ENCODE measurements at regions of chr11 and their contacts with region 1.

Region 1: DNA sequence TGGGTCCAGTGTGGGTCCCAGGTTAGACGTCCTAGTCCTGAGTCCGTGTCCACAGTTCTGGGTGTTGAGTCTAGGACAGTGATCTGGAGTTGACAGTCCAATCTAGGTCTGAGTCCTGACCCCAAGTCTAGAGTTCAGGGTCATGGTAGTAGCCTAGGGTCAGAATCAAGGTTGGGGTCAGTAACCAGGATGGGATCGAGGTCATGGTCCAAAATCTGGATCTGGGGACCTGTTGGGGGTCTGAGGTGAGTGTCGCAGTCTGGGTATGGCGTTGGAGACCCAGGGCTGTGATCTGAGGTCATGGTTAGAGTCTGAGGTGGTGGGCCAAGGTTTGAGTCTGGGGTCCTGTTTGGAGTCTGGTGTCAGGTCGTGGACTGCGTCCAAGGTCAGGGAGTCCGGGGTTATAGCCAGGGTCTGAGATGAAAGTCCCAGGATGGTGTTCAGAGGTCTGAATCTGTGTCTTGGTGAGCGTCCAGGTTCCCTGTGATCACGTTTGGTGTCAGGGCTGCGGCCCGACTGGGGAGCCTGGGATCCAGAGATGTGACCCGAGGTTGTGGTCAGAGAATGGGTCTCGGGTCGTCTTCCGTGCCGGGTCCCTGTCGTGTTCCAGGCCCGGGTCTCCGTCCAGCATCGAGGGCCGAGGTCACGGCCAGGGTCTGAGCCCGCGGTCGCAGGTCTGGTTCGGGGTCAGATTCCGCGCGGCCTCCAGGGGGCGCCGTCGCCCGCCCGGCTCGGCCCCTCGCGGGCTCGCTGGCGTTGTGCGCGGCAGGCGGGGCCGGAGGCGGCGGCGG is 445 bp upstream of the GRK2 start:
- DNase-seq: peak; percentile 61 to 85 (median 77)
- H3K4me3 ChIP-seq: peak overlapping the region in 1 of 2 donors; percentile 23
- H3K4me3 Mint-ChIP-seq: peak overlapping the region; percentile 77 to 86 (median 80)
- H3K27ac ChIP-seq: peak overlapping the region; percentile 63
- H3K27ac Mint-ChIP-seq: peak overlapping the region; percentile 79 to 94 (median 87)
- H3K4me1 ChIP-seq: peaks cover 61% of the 10 kb centered on the region
- H3K4me1 Mint-ChIP-seq: peaks cover 34 to 82% (median 50%) of the 10 kb centered on the region in 4 donors
- H3K27me3 ChIP-seq: no peaks in the 10 kb centered on the region
- H3K27me3 Mint-ChIP-seq: peaks cover 0 to 5% of the 10 kb centered on the region in 2 donors

Region 2: GRCh38 chr11:67213178-67213621 is 52.6 kb before region 1 on chr11:
- CTCF ChIA-PET with region 1: no interaction called
- POLR2A ChIA-PET with region 1: no interaction called
- intact Hi-C with region 1: no loop called
- DNase-seq: no peak
- H3K4me3 ChIP-seq: no peak overlapping the region
- H3K4me3 Mint-ChIP-seq: no peak overlapping the region
- H3K27ac ChIP-seq: no peak overlapping the region
- H3K27ac Mint-ChIP-seq: no peak overlapping the region
- H3K4me1 ChIP-seq: no peaks in the 10 kb centered on the region
- H3K4me1 Mint-ChIP-seq: peaks cover 0 to 6% (median 1%) of the 10 kb centered on the region in 4 donors
- H3K27me3 ChIP-seq: no peaks in the 10 kb centered on the region
- H3K27me3 Mint-ChIP-seq: no peaks in the 10 kb centered on the region

Region 3: DNA sequence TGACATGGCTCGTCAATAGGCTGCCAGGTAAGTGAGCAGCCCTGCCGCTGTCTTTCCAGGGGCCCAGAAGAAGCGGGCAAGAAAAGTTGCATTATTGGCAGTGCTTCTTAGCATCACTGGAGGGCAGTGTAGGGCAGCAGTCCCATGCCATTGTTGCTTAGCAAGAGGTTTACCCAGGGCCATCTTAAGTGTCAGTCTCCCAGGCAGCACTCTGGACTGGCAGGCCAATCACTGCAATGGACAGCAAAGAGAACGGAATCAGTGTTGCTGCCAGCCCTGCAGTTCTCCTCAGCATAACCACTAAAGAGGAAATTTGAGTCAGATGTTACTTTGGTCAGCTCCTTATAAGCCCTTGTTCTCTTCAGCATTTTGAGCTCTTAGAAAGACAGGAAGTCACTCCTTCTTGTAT is 13.0 kb before region 1 on chr11:
- CTCF ChIA-PET with region 1: interaction called, 24 read pairs
- POLR2A ChIA-PET with region 1: interaction called, 5 read pairs
- intact Hi-C with region 1: no loop called
- DNase-seq: peak; percentile 26 to 46 (median 40)
- H3K4me3 ChIP-seq: no peak overlapping the region
- H3K4me3 Mint-ChIP-seq: peak overlapping the region in 3 of 8 donors; percentile 6 to 59 (median 39)
- H3K27ac ChIP-seq: no peak overlapping the region
- H3K27ac Mint-ChIP-seq: peak overlapping the region in 6 of 7 donors; percentile 7 to 78 (median 32)
- H3K4me1 ChIP-seq: peaks cover 15% of the 10 kb centered on the region
- H3K4me1 Mint-ChIP-seq: peaks cover 10 to 52% (median 32%) of the 10 kb centered on the region in 4 donors
- H3K27me3 ChIP-seq: no peaks in the 10 kb centered on the region
- H3K27me3 Mint-ChIP-seq: no peaks in the 10 kb centered on the region

Region 4: GRCh38 chr11:67288452-67289225 is 22.8 kb after region 1 on chr11:
- CTCF ChIA-PET with region 1: interaction called, 22 read pairs
- POLR2A ChIA-PET with region 1: interaction called, 1,163 read pairs
- intact Hi-C with region 1: loop called (anchors 1 kb)
- DNase-seq: peak; percentile 89 to 94 (median 91)
- H3K4me3 ChIP-seq: peak overlapping the region; percentile 58 to 62
- H3K4me3 Mint-ChIP-seq: peak overlapping the region; percentile 79 to 90 (median 86)
- H3K27ac ChIP-seq: peak overlapping the region; percentile 88
- H3K27ac Mint-ChIP-seq: peak overlapping the region; percentile 95 to 100 (median 98)
- H3K4me1 ChIP-seq: peaks cover 77% of the 10 kb centered on the region
- H3K4me1 Mint-ChIP-seq: peaks cover 32 to 81% (median 46%) of the 10 kb centered on the region in 4 donors
- H3K27me3 ChIP-seq: no peaks in the 10 kb centered on the region
- H3K27me3 Mint-ChIP-seq: no peaks in the 10 kb centered on the region

Region 5: GRCh38 chr11:67345920-67346799 is 80.3 kb after region 1 on chr11:
- CTCF ChIA-PET with region 1: interaction called, 18 read pairs
- POLR2A ChIA-PET with region 1: interaction called, 5 read pairs
- intact Hi-C with region 1: no loop called
- DNase-seq: peak in 4 of 5 donors; percentile 30 to 41 (median 38)
- H3K4me3 ChIP-seq: no peak overlapping the region
- H3K4me3 Mint-ChIP-seq: peak overlapping the region in 3 of 8 donors; percentile 35 to 51 (median 50)
- H3K27ac ChIP-seq: no peak overlapping the region
- H3K27ac Mint-ChIP-seq: peak overlapping the region in 6 of 7 donors; percentile 50 to 92 (median 85)
- H3K4me1 ChIP-seq: peaks cover 35% of the 10 kb centered on the region
- H3K4me1 Mint-ChIP-seq: peaks cover 28 to 55% (median 36%) of the 10 kb centered on the region in 4 donors
- H3K27me3 ChIP-seq: no peaks in the 10 kb centered on the region
- H3K27me3 Mint-ChIP-seq: no peaks in the 10 kb centered on the region

Region 6: GRCh38 chr11:67382276-67383136 is 116.7 kb after region 1 on chr11:
- CTCF ChIA-PET with region 1: interaction called, 16 read pairs
- POLR2A ChIA-PET with region 1: no interaction called
- intact Hi-C with region 1: loop called (anchors 1 kb)
- DNase-seq: peak; percentile 79 to 84 (median 82)
- H3K4me3 ChIP-seq: no peak overlapping the region
- H3K4me3 Mint-ChIP-seq: peak overlapping the region in 1 of 8 donors; percentile 37
- H3K27ac ChIP-seq: no peak overlapping the region
- H3K27ac Mint-ChIP-seq: peak overlapping the region in 4 of 7 donors; percentile 47 to 86 (median 68)
- H3K4me1 ChIP-seq: peaks cover 6% of the 10 kb centered on the region
- H3K4me1 Mint-ChIP-seq: peaks cover 2 to 8% (median 6%) of the 10 kb centered on the region in 4 donors
- H3K27me3 ChIP-seq: no peaks in the 10 kb centered on the region
- H3K27me3 Mint-ChIP-seq: peaks cover 0 to 1% of the 10 kb centered on the region in 2 donors

Measured in CD4-positive, alpha-beta memory T cell (primary cell).